ENCODE measurements at regions of chr14 and their contacts with region 1.

Region 1: GRCh38 chr14:60349663-60350365 is 100.8 kb downstream of the PPM1A start:
- DNase-seq: no peak
- H3K4me3 ChIP-seq: no peak overlapping the region
- H3K27me3 ChIP-seq: no peaks in the 10 kb centered on the region; the same call in 1 of the 2 replicates
- CTCF ChIP-seq: peak; percentile 50

Region 2: DNA sequence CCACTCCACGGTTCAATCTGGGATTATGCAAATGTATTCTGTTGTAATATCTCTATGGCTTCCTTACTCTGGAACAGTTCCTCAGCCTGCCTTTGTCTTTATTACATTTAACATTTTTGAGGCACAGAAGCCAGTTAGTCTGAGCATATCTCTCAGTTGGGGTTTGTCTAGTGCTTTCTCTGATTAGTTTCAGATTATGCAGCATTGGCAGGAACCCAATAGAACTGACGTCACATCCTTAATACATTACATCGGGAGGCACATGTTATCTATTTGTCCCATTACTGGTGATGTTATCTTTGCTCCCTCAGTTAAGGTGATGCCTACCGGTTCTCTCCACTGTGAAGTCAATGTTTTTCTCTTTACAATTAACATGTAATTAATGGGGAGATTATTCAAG is 38.4 kb before region 1 on chr14:
- CTCF ChIA-PET with region 1: no interaction called
- POLR2A ChIA-PET with region 1: no interaction called
- DNase-seq: peak; percentile 9
- H3K4me3 ChIP-seq: no peak overlapping the region
- H3K27me3 ChIP-seq: no peaks in the 10 kb centered on the region; the same call in 1 of the 2 replicates
- CTCF ChIP-seq: no peak

Region 3: GRCh38 chr14:60331201-60332045 is 18.4 kb before region 1 on chr14:
- CTCF ChIA-PET with region 1: interaction called, 10 read pairs
- POLR2A ChIA-PET with region 1: no interaction called
- DNase-seq: no peak
- H3K4me3 ChIP-seq: peak overlapping the region; percentile 7
- H3K27me3 ChIP-seq: peaks cover 11% of the 10 kb centered on the region
- CTCF ChIP-seq: peak; percentile 67

Region 4: GRCh38 chr14:60339571-60339970 is 10.2 kb before region 1 on chr14:
- CTCF ChIA-PET with region 1: interaction called, 11 read pairs
- POLR2A ChIA-PET with region 1: no interaction called
- DNase-seq: no peak
- H3K4me3 ChIP-seq: no peak overlapping the region
- H3K27me3 ChIP-seq: peaks cover 3% of the 10 kb centered on the region; the same call in 1 of the 2 replicates
- CTCF ChIP-seq: no peak

Region 5: DNA sequence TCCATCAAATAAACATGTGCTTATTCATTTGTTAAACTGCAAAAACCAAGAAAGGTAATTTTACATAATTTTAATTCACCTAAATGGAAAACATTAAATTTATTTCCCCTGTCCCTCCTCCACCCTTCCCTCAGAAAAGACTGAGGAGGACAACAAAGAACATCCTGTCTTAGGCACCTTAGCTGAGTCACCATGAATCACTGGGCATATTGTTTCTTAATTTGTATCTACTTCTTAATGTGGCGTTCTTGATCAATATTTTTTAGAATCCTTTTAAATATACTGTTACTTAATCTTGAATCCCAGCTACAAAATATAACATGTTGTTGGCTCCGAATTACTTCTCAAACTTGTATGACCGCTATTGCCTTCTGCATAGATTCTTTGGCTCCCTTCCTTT is 182.6 kb after region 1 on chr14:
- CTCF ChIA-PET with region 1: no interaction called
- POLR2A ChIA-PET with region 1: no interaction called
- DNase-seq: no peak
- H3K4me3 ChIP-seq: no peak overlapping the region
- H3K27me3 ChIP-seq: no peaks in the 10 kb centered on the region
- CTCF ChIP-seq: no peak

Region 6: GRCh38 chr14:60561845-60562746 is 212.3 kb after region 1 on chr14:
- CTCF ChIA-PET with region 1: interaction called, 25 read pairs
- POLR2A ChIA-PET with region 1: no interaction called
- DNase-seq: no peak
- H3K4me3 ChIP-seq: no peak overlapping the region
- H3K27me3 ChIP-seq: no peaks in the 10 kb centered on the region
- CTCF ChIP-seq: peak; percentile 63

Region 7: GRCh38 chr14:61281186-61281947 is 931.6 kb after region 1 on chr14 and contains the start of gene TMEM30B:
- CTCF ChIA-PET with region 1: interaction called, 13 read pairs
- POLR2A ChIA-PET with region 1: no interaction called
- DNase-seq: no peak
- H3K4me3 ChIP-seq: peak within 1 kb of the TSS; percentile 34
- H3K27me3 ChIP-seq: peaks cover 7% of the 10 kb centered on the region
- CTCF ChIP-seq: no peak
- polyA plus RNA-seq, gene TMEM30B: 0.06 and 0.32 TPM in 2 replicates

Measured in BJ (cell line).